AG04450 (cell line): ENCODE measurements at regions of chr17 and their contacts with region 1.

Region 1: DNA sequence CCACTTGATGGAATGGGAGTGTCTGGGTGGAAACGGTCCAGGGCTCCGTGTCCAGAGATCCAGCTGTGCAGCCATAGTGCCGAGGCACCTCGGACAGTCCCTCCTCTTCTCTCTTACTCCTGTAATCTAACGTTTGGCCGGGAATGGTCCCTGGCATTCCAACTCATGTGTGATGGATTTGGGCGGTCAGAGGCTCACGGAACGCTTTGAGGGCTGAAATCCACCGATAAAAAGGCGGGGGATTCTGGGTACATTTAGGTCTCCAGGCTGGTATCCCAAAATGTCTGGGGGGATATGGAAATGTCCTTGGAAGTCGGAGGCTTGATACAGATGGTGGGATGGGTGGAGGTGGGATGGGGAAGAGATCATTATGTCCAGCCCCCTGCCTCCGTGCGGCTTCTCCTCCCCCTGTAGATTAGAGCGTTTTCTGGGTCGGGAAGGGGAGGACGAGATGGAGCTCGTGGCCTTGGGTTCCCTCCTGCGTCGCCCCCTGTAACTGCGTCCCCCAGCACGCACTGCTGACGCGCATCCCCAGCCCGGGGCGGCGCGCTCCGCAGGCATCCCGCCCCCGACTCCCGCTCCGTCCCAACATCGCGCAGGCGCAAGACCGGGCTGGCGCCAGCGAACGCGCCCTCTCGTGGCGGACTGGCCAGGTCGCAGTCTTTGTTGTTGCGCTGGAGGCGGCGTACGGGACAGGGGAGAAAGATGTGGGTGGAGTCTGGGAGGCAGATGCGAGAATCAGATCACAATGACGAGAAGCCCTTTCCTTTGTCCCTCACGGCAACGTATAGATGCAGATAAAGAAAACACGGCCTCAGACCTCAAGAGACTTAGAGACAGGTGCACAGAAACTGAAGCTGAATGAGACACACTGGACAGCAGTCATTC is 4.5 kb upstream of the SGCA start:
- DNase-seq: peak; percentile 83
- H3K4me3 ChIP-seq: peak overlapping the region; percentile 73
- H3K27ac ChIP-seq: peak overlapping the region; percentile 57
- H3K27me3 ChIP-seq: no peaks in the 10 kb centered on the region
- CTCF ChIP-seq: peak; percentile 84

Region 2: GRCh38 chr17:49910094-49910857 is 251.0 kb before region 1 on chr17:
- CTCF ChIA-PET with region 1: no interaction called
- POLR2A ChIA-PET with region 1: no interaction called
- DNase-seq: no peak
- H3K4me3 ChIP-seq: no peak overlapping the region
- H3K27ac ChIP-seq: no peak overlapping the region
- H3K27me3 ChIP-seq: peaks cover 82% of the 10 kb centered on the region
- CTCF ChIP-seq: no peak

Region 3: DNA sequence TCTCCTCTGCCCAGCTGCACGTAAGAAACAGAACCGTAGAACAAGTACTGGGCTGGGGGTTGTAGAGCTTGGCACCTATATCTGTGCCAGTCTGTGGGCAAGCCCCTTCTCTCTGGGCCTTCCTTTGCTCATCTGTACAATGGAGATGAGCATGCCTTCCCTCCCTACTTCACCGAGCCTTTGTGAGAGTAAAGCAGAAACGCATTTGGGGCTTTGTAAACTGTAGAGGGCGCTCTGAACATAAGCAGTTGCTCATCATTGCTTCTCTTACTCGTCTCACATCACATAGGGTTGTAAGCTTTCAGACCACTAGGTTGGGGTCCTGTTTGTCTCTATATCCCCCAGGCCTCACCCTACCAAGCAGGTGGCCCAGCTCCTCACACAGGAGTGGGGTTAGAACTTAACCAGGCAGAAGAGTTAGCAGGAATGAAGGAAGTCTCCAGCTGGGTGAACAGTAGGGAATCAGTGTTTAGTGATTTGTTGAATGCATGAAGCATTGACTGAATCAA is 46.4 kb before region 1 on chr17:
- CTCF ChIA-PET with region 1: interaction called, 19 read pairs
- POLR2A ChIA-PET with region 1: no interaction called
- DNase-seq: no peak
- H3K4me3 ChIP-seq: no peak overlapping the region
- H3K27ac ChIP-seq: no peak overlapping the region
- H3K27me3 ChIP-seq: peaks cover 3% of the 10 kb centered on the region
- CTCF ChIP-seq: peak; percentile 76

Region 4: GRCh38 chr17:50123649-50124349 is 37.5 kb before region 1 on chr17:
- CTCF ChIA-PET with region 1: interaction called, 19 read pairs
- POLR2A ChIA-PET with region 1: interaction called, 4 read pairs
- DNase-seq: no peak
- H3K4me3 ChIP-seq: no peak overlapping the region; the same call in 1 of the 2 replicates
- H3K27ac ChIP-seq: peak overlapping the region; percentile 21
- H3K27me3 ChIP-seq: peaks cover 2% of the 10 kb centered on the region
- CTCF ChIP-seq: no peak

Region 5: DNA sequence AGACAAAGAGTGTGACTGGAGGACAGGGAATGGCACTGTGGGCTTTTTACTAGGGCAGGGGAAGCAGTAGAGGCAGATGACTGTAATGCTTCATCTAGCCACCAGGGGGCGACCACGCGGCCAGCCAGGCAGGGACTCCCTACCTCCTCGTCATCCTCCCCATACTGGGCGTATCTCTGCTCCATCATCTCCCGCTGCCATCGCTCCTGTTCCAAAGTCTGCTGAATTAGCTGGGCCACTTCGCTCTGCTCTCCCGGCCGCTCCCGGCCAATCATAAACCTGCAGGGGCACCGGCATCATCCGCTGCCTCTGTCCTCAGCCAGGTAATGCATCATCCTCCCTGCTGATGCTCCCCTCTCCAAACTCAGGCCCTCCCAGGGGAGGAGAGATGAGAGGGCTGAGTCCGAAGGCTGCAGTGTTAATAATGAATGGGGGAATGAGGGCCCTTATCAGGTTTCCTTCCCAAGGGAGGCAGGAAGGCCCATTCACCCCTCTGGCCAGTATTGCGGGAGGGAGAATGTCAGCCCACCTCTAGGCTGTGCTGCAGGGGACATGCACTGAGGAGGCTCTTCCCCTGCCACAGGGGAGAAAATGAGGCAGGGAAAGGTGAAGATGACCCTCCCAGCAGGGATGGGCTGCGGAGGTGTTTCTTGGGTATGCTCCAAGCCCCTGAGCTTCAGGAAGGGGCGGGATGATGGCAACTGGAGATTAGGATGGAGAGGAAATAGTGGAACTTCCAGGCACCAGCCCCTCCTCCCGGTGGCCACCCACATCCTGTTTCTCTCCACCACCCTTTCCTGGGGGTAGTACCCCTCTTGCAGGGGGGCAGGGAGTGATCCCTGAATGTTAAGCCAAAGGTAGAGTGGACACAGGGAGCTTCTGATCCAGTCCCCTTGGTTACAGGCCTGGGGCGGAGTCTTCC is 21.1 kb before region 1 on chr17:
- CTCF ChIA-PET with region 1: interaction called, 25 read pairs
- POLR2A ChIA-PET with region 1: no interaction called
- DNase-seq: no peak
- H3K4me3 ChIP-seq: no peak overlapping the region
- H3K27ac ChIP-seq: no peak overlapping the region
- H3K27me3 ChIP-seq: no peaks in the 10 kb centered on the region
- CTCF ChIP-seq: peak; percentile 75

Region 6: GRCh38 chr17:50283246-50283645 is 122.0 kb after region 1 on chr17:
- CTCF ChIA-PET with region 1: interaction called, 12 read pairs
- POLR2A ChIA-PET with region 1: no interaction called
- DNase-seq: no peak
- H3K4me3 ChIP-seq: no peak overlapping the region
- H3K27ac ChIP-seq: no peak overlapping the region
- H3K27me3 ChIP-seq: no peaks in the 10 kb centered on the region
- CTCF ChIP-seq: no peak

Region 7: DNA sequence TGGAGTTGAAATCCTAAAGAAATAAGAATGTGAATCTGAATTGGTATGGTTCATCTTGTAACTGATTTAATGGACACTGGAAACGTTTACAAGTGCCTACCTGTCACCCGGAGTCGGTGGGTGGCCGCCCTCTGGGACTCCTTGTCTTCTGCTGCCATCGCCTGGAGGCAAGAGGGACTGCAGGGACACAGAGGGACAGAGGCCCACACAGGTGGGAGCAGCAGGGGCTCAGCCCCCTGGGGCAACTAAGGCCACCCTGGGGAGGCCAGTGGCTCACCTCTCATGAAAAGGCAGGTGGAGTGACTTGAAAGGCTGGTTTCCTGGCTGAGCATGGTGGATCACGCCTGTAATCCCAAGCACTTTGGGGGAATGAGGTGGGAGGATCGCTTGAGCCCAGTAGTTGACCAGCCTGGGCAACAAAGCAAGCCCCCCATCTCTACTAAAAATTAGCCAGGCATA is 136.2 kb after region 1 on chr17:
- CTCF ChIA-PET with region 1: interaction called, 32 read pairs
- POLR2A ChIA-PET with region 1: no interaction called
- DNase-seq: no peak
- H3K4me3 ChIP-seq: no peak overlapping the region
- H3K27ac ChIP-seq: no peak overlapping the region
- H3K27me3 ChIP-seq: no peaks in the 10 kb centered on the region
- CTCF ChIP-seq: peak; percentile 82